MCF 10A (cell line): ENCODE measurements at regions of chr1 and their contacts with region 1.

Region 1: GRCh38 chr1:8142955-8143629 is 117.0 kb upstream of the ERRFI1 start:
- DNase-seq: no peak
- H3K4me3 Mint-ChIP-seq: no peak overlapping the region
- H3K27ac Mint-ChIP-seq: no peak overlapping the region
- H3K4me1 Mint-ChIP-seq: peaks cover 22% of the 10 kb centered on the region
- H3K27me3 Mint-ChIP-seq: no peaks in the 10 kb centered on the region
- CTCF ChIP-seq: no peak

Region 2: DNA sequence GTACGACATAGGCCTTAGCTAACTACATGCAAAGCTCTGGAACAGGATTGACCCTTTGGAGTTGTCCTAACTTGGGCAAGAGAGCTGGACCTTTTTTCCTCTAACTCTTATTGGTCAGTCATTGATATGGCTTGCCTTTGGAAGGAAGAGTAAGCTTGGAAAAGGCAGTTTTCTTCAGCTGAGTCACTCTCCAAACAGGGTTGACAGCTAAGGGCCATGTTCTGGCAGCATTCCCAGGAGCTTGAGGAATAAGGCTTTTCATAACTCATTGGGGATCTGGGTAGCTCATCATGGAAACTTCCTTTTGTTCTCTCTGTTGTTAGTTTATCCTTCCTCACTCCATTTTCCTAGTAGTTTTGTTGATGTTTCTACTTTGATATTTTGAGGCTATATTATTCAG is 102.5 kb before region 1 on chr1:
- CTCF ChIA-PET with region 1: interaction called, 3 read pairs
- POLR2A ChIA-PET with region 1: no interaction called
- intact Hi-C with region 1: loop called (anchors 5 kb)
- DNase-seq: peak; percentile 99
- H3K4me3 Mint-ChIP-seq: no peak overlapping the region
- H3K27ac Mint-ChIP-seq: peak overlapping the region; percentile 66
- H3K4me1 Mint-ChIP-seq: peaks cover 30% of the 10 kb centered on the region
- H3K27me3 Mint-ChIP-seq: no peaks in the 10 kb centered on the region
- CTCF ChIP-seq: no peak

Region 3: DNA sequence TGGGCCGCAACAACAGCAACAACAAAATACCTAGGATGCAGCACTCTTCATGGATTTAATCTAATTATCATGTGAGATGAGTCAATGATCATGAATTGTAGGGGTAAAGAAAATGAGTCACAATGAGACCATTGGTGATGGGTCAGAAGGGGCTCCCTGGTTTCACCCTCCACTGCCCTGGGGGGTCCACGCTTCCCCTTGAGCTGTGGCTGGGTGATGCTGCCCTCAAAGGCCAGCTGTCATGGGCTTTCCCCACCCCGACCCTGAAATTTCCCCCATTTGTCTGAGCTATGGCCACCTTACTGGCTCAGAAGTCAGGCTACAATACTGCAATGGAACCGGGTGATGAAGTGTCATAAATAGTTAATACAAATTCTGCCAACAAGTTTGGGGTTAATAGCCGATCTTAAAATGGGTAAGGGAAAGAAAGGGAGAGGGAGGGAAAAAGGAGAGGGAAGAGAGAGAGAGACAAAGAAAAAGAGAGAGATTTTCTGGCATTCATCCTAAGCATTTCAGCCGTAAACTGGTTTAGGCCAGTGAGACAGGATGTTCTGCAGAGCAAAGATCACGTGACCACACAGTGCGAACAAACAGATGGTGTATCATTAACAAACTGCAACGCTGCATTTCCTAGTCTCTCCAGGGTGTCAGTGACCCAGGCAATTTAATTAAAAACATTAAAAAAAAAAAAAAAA is 26.4 kb after region 1 on chr1:
- CTCF ChIA-PET with region 1: interaction called, 3 read pairs
- POLR2A ChIA-PET with region 1: interaction called, 10 read pairs
- intact Hi-C with region 1: no loop called
- DNase-seq: peak; percentile 77
- H3K4me3 Mint-ChIP-seq: peak overlapping the region; percentile 38
- H3K27ac Mint-ChIP-seq: peak overlapping the region; percentile 94
- H3K4me1 Mint-ChIP-seq: peaks cover 21% of the 10 kb centered on the region
- H3K27me3 Mint-ChIP-seq: no peaks in the 10 kb centered on the region
- CTCF ChIP-seq: no peak

Region 4: DNA sequence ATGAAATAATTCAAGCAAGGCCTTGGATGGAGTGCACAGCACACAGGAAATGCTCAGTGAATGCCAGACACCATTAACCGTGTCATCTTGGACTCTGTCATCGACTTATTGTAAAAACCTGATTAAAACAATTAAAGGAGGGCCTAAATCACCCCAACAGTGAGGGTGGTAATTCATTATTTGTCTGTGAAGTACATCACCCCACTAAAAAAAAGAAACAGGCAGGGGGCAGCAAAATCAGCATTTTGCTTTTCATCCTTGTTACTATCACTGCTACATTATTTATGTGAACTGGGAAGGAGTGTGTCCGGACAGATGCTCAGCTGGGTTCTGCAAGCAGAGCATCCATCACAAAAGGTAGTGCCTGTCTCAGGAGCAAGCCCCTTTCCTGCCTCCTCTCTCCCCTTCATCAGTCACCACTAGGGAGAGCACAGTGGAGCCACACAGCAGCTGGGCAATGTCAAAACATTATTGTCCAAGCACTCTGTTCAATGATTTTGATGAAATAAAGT is 575.8 kb after region 1 on chr1:
- CTCF ChIA-PET with region 1: no interaction called
- POLR2A ChIA-PET with region 1: no interaction called
- intact Hi-C with region 1: no loop called
- DNase-seq: no peak
- H3K4me3 Mint-ChIP-seq: no peak overlapping the region
- H3K27ac Mint-ChIP-seq: no peak overlapping the region
- H3K4me1 Mint-ChIP-seq: peaks cover 20% of the 10 kb centered on the region
- H3K27me3 Mint-ChIP-seq: no peaks in the 10 kb centered on the region
- CTCF ChIP-seq: no peak